CD8-positive, alpha-beta memory T cell (primary cell): ENCODE measurements at regions of chr19 and their contacts with region 1.

Region 1: DNA sequence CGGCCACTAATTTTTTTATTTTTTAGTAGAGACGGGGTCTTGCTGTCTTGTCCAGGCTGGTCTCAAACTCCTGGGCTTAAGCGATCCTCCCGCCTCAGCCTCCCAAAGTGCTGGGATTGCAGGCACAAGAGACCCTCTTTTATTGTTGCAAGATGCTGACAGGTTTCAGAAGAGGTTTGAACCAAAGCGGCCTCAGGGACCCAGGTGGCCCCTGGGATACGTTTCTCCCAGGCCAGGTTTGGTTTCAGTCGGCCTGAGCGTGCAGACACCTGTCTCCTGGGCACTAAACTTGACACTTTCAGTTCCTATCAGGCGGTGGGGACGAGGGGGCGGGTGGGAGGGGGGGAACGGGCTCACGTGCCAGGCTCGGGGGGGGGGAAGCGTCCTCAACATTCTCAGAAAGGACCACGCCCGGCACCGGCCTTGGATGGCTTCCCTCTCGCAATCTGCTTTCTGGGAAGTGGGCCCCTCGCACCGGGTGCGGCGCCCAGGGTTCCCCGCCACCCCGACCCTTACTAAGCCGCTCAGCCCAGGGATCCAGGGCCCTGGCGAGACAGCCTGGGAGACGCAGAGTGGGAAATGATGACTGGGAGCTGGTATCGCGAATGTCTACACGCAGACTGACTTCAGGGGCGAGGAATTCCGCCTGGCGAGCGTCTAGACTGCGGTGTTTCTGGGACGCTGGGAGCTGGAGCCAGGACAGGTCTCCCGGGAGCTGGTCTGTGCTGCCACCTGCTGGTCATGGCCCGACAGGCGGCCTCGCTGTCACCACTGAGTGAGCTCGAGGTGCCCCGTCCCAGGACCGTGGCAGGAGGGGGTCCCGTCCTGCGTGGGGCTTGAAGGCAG is 91.6 kb downstream of the GNG7 start:
- DNase-seq: peak; percentile 76 to 89 (median 87)
- H3K4me3 ChIP-seq: peak overlapping the region; percentile 67
- H3K4me3 Mint-ChIP-seq: peak overlapping the region; percentile 45 to 89 (median 83)
- H3K27ac ChIP-seq: no peak overlapping the region
- H3K27ac Mint-ChIP-seq: peak overlapping the region in 7 of 8 donors; percentile 29 to 95 (median 85)
- H3K4me1 ChIP-seq: peaks cover 28% of the 10 kb centered on the region
- H3K4me1 Mint-ChIP-seq: peaks cover 32 to 47% (median 39%) of the 10 kb centered on the region in 3 donors
- H3K27me3 ChIP-seq: no peaks in the 10 kb centered on the region
- H3K27me3 Mint-ChIP-seq: peaks cover 0 to 5% of the 10 kb centered on the region in 2 donors

Region 2: GRCh38 chr19:2236314-2237050 is 374.4 kb before region 1 on chr19 and contains the starts of genes PLEKHJ1 and SF3A2:
- CTCF ChIA-PET with region 1: interaction called, 4 read pairs
- POLR2A ChIA-PET with region 1: interaction called, 14 read pairs
- DNase-seq: peak; percentile 96 to 100 (median 99)
- H3K4me3 ChIP-seq: peak within 1 kb of the TSS; percentile 88
- H3K4me3 Mint-ChIP-seq: peak within 1 kb of the TSS; percentile 89 to 100 (median 98)
- H3K27ac ChIP-seq: peak within 1 kb of the TSS; percentile 98
- H3K27ac Mint-ChIP-seq: peak within 1 kb of the TSS; percentile 92 to 99 (median 98)
- H3K4me1 ChIP-seq: peaks cover 60% of the 10 kb centered on the region
- H3K4me1 Mint-ChIP-seq: peaks cover 58 to 77% (median 63%) of the 10 kb centered on the region in 3 donors
- H3K27me3 ChIP-seq: no peaks in the 10 kb centered on the region
- H3K27me3 Mint-ChIP-seq: peaks cover 0 to 5% of the 10 kb centered on the region in 2 donors
- total RNA-seq, gene PLEKHJ1: 96.6 to 99.1 TPM
- total RNA-seq, gene SF3A2: 131 to 138 TPM

Region 3: DNA sequence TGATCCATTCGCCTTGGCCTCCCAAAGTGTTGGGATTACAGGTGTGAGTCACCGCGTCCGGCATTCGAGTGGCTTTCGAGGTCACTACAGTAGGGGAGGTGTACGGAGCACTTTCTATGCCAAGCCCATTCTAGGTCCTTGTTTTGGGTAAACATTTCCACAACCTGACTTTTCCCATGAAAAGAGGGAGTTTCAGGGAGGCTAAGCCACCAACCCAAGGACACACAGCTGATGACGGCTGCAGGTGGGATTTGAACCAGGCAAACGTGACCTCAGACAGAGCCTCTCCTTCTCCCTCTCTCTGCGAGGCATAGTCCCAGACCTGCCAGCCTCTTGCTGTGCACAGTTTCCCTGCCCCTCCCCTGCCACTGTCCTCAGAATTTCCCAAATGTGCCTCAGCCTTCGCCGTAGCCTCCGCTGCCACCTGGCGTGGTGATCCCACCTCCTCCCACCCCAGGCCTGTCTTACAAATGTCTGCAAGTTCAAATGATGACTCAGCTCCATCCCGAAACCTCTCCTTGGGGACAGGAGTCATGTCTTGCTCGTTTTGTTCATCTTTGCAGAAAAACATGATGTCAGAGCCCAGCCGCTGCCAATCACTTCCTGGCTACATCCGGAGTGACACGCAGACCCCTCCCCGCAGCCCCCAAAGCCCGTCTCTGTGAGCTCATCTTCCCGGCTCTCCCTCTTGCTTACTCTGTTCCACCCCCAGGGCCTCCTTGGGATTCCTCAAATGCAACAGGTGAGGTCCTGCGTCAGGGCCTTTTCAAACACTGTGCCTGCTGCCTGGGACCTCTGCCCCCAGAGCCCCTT is 141.6 kb before region 1 on chr19:
- CTCF ChIA-PET with region 1: interaction called, 31 read pairs
- POLR2A ChIA-PET with region 1: interaction called, 101 read pairs
- DNase-seq: peak in 1 of 5 donors; percentile 13
- H3K4me3 ChIP-seq: no peak overlapping the region
- H3K4me3 Mint-ChIP-seq: no peak overlapping the region
- H3K27ac ChIP-seq: no peak overlapping the region
- H3K27ac Mint-ChIP-seq: no peak overlapping the region
- H3K4me1 ChIP-seq: no peaks in the 10 kb centered on the region
- H3K4me1 Mint-ChIP-seq: peaks cover 0 to 5% (median 1%) of the 10 kb centered on the region in 3 donors
- H3K27me3 ChIP-seq: no peaks in the 10 kb centered on the region
- H3K27me3 Mint-ChIP-seq: peaks cover 0 to 4% of the 10 kb centered on the region in 2 donors

Region 4: GRCh38 chr19:2561895-2562294 is 49.0 kb before region 1 on chr19:
- CTCF ChIA-PET with region 1: interaction called, 12 read pairs
- POLR2A ChIA-PET with region 1: no interaction called
- DNase-seq: peak; percentile 42 to 79 (median 64)
- H3K4me3 ChIP-seq: peak overlapping the region; percentile 86
- H3K4me3 Mint-ChIP-seq: peak overlapping the region; percentile 90 to 96 (median 93)
- H3K27ac ChIP-seq: no peak overlapping the region
- H3K27ac Mint-ChIP-seq: peak overlapping the region; percentile 84 to 99 (median 94)
- H3K4me1 ChIP-seq: peaks cover 15% of the 10 kb centered on the region
- H3K4me1 Mint-ChIP-seq: peaks cover 11 to 21% (median 13%) of the 10 kb centered on the region in 3 donors
- H3K27me3 ChIP-seq: no peaks in the 10 kb centered on the region
- H3K27me3 Mint-ChIP-seq: no peaks in the 10 kb centered on the region

Region 5: DNA sequence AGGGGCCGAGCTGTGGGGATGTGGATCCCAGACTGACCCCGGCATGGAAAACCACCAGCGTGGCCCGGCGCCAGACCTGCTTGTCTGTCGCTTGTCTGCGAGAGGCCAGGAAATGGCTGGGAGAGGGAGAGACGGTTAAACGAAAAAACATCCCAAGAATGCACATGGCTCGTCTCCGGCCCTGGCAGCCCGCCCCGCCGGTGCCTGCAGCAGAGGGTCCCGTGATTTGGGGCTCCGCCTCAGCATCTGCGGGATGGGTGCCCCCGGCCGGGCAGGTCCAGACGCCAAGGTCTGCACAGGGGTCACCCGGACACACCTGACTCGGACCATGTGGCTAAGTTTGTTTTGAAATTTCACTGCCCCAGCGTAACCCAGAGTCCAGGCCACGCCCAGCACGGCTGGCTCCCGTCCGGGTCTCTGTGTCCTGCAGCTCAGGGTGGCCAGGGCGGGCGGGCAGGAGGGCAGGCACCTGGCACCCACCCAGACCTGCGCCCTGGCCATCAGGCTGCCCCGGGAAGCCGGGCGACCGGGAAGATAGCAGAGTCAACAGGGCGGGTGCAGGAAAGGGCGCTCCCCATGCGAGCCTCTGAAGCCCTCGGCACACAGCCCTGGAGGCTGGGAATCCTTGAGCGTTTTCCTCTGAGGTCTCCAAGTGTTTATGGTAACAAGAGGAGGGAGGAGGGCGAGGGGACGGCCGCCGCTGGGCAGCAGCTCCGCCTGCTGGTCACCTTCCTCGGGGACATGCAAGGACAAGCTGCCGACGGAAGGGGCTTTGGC is 31.8 kb before region 1 on chr19:
- CTCF ChIA-PET with region 1: interaction called, 28 read pairs
- POLR2A ChIA-PET with region 1: interaction called, 4 read pairs
- DNase-seq: peak; percentile 40 to 79 (median 52)
- H3K4me3 ChIP-seq: peak overlapping the region; percentile 43
- H3K4me3 Mint-ChIP-seq: peak overlapping the region in 3 of 7 donors; percentile 34 to 39 (median 36)
- H3K27ac ChIP-seq: no peak overlapping the region
- H3K27ac Mint-ChIP-seq: no peak overlapping the region
- H3K4me1 ChIP-seq: peaks cover 12% of the 10 kb centered on the region
- H3K4me1 Mint-ChIP-seq: peaks cover 0 to 10% (median 0%) of the 10 kb centered on the region in 3 donors
- H3K27me3 ChIP-seq: peaks cover 5% of the 10 kb centered on the region
- H3K27me3 Mint-ChIP-seq: peaks cover 6 to 9% of the 10 kb centered on the region in 2 donors

Region 6: DNA sequence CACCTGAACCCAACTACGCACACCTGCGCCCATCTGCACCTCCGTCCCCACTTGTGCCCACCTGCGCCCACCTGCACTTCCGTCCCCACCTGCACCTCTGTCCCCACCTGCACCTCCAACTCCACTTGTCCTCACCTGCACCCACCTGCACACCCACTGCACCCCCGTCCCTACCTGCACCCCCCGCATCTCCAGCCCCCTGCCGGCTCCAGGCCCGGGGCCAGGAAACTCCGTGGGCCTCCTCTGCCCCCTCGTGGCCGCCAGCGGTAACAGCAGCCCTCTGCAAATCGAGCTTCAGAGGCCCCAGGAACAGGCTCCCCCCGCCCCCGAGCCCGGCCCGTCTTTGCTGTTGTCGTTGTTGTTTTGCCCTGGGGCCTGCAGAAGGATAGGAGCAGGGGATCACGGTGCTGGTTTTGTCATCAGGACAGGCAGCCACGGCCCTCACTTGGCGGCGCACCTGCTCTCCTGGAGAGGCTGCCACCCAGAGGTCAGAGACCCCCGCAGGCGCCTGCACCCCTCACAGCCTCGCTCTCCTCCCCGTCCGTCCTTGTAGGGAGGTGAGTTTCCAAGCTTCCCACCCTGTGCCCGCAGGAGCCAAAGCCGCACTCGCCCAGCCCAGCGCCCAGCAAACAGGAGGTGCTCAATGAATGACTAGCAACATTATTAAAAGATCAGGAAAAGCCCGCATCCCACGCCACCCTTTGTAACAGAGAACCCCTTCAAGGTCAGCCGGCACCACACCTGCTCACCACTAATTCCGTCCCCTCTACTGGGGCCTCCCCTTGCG is 26.2 kb after region 1 on chr19:
- CTCF ChIA-PET with region 1: interaction called, 152 read pairs
- POLR2A ChIA-PET with region 1: interaction called, 5 read pairs
- DNase-seq: peak; percentile 68 to 84 (median 70)
- H3K4me3 ChIP-seq: no peak overlapping the region
- H3K4me3 Mint-ChIP-seq: peak overlapping the region in 1 of 7 donors; percentile 44
- H3K27ac ChIP-seq: no peak overlapping the region
- H3K27ac Mint-ChIP-seq: peak overlapping the region in 2 of 8 donors; percentile 23 to 85
- H3K4me1 ChIP-seq: peaks cover 10% of the 10 kb centered on the region
- H3K4me1 Mint-ChIP-seq: peaks cover 0 to 12% (median 4%) of the 10 kb centered on the region in 3 donors
- H3K27me3 ChIP-seq: no peaks in the 10 kb centered on the region
- H3K27me3 Mint-ChIP-seq: peaks cover 0 to 4% of the 10 kb centered on the region in 2 donors